ENCODE measurements at regions of chr3 and their contacts with region 1.

Region 1: GRCh38 chr3:15629860-15630597 is 28.5 kb downstream of the BTD start:
- DNase-seq: peak; percentile 70 to 78 (median 75)
- H3K4me3 ChIP-seq: no peak overlapping the region
- H3K4me3 Mint-ChIP-seq: peak overlapping the region; percentile 10 to 83 (median 73)
- H3K27ac ChIP-seq: no peak overlapping the region
- H3K27ac Mint-ChIP-seq: peak overlapping the region in 6 of 7 donors; percentile 14 to 79 (median 67)
- H3K4me1 ChIP-seq: peaks cover 30% of the 10 kb centered on the region
- H3K4me1 Mint-ChIP-seq: peaks cover 15 to 48% (median 31%) of the 10 kb centered on the region in 4 donors
- H3K27me3 ChIP-seq: no peaks in the 10 kb centered on the region
- H3K27me3 Mint-ChIP-seq: no peaks in the 10 kb centered on the region

Region 2: DNA sequence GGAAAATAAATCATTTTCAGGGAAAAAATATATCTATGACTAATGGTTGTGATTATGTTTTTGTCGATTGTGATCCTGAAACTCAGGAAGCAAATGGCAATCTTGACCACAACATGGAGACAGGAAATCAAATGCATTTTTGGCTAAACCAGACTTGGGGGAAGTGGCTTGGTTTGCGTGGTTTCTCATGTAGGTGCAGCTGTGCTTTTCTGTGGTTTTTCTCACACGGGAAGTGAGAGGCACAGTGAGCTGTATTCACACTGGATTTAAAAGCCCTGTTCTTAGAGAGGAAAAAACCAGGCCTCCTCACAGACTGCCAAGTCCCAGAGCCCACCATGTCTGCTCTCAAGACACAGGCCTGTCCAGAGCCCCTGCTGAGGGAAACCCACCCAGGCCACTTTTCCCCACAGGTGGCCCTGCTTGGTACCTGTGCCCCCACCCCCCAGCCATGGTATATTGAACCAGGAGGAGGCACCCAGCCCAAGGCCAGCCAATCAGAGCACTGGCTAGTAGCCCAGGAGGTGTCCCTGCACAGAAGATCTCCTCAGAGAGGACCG is 17.7 kb after region 1 on chr3:
- CTCF ChIA-PET with region 1: interaction called, 14 read pairs
- POLR2A ChIA-PET with region 1: interaction called, 7 read pairs
- intact Hi-C with region 1: loop called (anchors 2 kb)
- DNase-seq: peak; percentile 62 to 74 (median 70)
- H3K4me3 ChIP-seq: no peak overlapping the region
- H3K4me3 Mint-ChIP-seq: peak overlapping the region; percentile 58 to 88 (median 78)
- H3K27ac ChIP-seq: no peak overlapping the region
- H3K27ac Mint-ChIP-seq: peak overlapping the region; percentile 36 to 84 (median 76)
- H3K4me1 ChIP-seq: peaks cover 45% of the 10 kb centered on the region
- H3K4me1 Mint-ChIP-seq: peaks cover 34 to 55% (median 47%) of the 10 kb centered on the region in 4 donors
- H3K27me3 ChIP-seq: no peaks in the 10 kb centered on the region
- H3K27me3 Mint-ChIP-seq: peaks cover 0 to 5% of the 10 kb centered on the region in 2 donors

Region 3: DNA sequence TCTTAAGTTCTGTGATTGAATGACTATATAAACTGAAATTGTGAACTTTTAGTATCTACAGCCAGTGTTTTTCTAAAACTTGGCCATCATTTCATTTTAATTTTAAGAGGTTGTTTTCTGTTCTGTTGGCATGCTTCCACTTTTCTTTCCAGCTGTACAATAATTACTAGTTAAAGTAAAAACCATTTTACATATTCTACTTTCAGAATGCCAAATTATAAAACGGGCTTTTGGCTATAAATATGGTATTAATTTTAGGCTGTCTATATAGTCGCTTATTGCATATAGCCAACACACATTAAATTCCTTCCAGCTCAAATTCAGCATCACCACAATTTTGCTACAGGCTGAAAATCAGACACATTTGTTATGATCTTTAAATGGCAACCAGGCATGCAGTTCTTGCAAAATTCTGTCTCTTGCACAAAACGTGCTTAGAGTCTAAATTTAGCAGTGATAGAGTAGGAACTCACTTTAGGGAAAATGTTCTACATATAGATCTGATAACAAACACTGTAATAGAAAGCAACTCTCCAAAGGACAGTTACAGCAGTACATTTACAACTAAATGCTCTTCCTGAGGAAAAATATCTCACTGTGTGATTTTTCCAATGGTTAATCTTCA is 52.6 kb after region 1 on chr3:
- CTCF ChIA-PET with region 1: interaction called, 4 read pairs
- POLR2A ChIA-PET with region 1: no interaction called
- intact Hi-C with region 1: loop called (anchors 5 kb)
- DNase-seq: no peak
- H3K4me3 ChIP-seq: no peak overlapping the region
- H3K4me3 Mint-ChIP-seq: no peak overlapping the region
- H3K27ac ChIP-seq: no peak overlapping the region
- H3K27ac Mint-ChIP-seq: no peak overlapping the region
- H3K4me1 ChIP-seq: no peaks in the 10 kb centered on the region
- H3K4me1 Mint-ChIP-seq: peaks cover 0 to 7% (median 5%) of the 10 kb centered on the region in 4 donors
- H3K27me3 ChIP-seq: no peaks in the 10 kb centered on the region
- H3K27me3 Mint-ChIP-seq: no peaks in the 10 kb centered on the region

Region 4: DNA sequence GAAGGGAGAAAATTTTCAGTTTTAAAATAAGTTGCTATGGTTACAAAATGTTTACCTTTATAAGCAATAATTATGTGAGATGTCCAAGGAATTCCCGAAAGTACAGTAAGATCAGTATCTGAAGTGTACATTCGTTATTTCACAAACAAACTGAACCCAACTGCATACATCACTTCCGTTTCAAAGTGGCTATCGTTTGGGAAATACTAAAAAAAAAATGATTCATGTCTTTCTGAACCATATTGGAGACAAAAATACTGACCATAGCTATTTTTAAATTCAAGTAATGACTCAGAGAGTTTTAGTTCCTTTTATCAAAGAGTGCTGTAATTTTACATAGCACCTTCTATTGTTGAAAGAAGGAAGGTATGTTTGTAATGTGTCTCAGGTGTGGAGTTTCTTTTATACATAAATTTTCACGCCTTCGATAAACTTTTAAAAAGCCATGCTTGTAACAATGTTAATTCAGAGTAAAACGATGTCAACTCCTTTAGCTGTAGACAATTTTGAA is 175.8 kb after region 1 on chr3:
- CTCF ChIA-PET with region 1: interaction called, 98 read pairs
- POLR2A ChIA-PET with region 1: interaction called, 3 read pairs
- intact Hi-C with region 1: no loop called
- DNase-seq: no peak
- H3K4me3 ChIP-seq: no peak overlapping the region
- H3K4me3 Mint-ChIP-seq: peak overlapping the region in 4 of 8 donors; percentile 14 to 29 (median 20)
- H3K27ac ChIP-seq: no peak overlapping the region
- H3K27ac Mint-ChIP-seq: peak overlapping the region in 6 of 7 donors; percentile 3 to 85 (median 25)
- H3K4me1 ChIP-seq: peaks cover 46% of the 10 kb centered on the region
- H3K4me1 Mint-ChIP-seq: peaks cover 50 to 66% (median 59%) of the 10 kb centered on the region in 4 donors
- H3K27me3 ChIP-seq: no peaks in the 10 kb centered on the region
- H3K27me3 Mint-ChIP-seq: no peaks in the 10 kb centered on the region

Region 5: GRCh38 chr3:15859507-15860013 is 229.5 kb after region 1 on chr3:
- CTCF ChIA-PET with region 1: no interaction called
- POLR2A ChIA-PET with region 1: no interaction called
- intact Hi-C with region 1: loop called (anchors 1 kb)
- DNase-seq: peak; percentile 70 to 80 (median 77)
- H3K4me3 ChIP-seq: peak overlapping the region in 1 of 2 donors; percentile 71
- H3K4me3 Mint-ChIP-seq: peak overlapping the region; percentile 70 to 100 (median 94)
- H3K27ac ChIP-seq: peak overlapping the region; percentile 63
- H3K27ac Mint-ChIP-seq: peak overlapping the region; percentile 88 to 96 (median 94)
- H3K4me1 ChIP-seq: peaks cover 20% of the 10 kb centered on the region
- H3K4me1 Mint-ChIP-seq: peaks cover 16 to 52% (median 29%) of the 10 kb centered on the region in 4 donors
- H3K27me3 ChIP-seq: no peaks in the 10 kb centered on the region
- H3K27me3 Mint-ChIP-seq: no peaks in the 10 kb centered on the region

Region 6: GRCh38 chr3:16177962-16178627 is 548.1 kb after region 1 on chr3:
- CTCF ChIA-PET with region 1: interaction called, 3 read pairs
- POLR2A ChIA-PET with region 1: no interaction called
- intact Hi-C with region 1: loop called (anchors 1 kb)
- DNase-seq: peak in 4 of 5 donors; percentile 35 to 51 (median 40)
- H3K4me3 ChIP-seq: no peak overlapping the region
- H3K4me3 Mint-ChIP-seq: peak overlapping the region in 1 of 8 donors; percentile 10
- H3K27ac ChIP-seq: no peak overlapping the region
- H3K27ac Mint-ChIP-seq: peak overlapping the region in 1 of 7 donors; percentile 38
- H3K4me1 ChIP-seq: no peaks in the 10 kb centered on the region
- H3K4me1 Mint-ChIP-seq: peaks cover 4 to 8% (median 6%) of the 10 kb centered on the region in 4 donors
- H3K27me3 ChIP-seq: no peaks in the 10 kb centered on the region
- H3K27me3 Mint-ChIP-seq: peaks cover 12 to 16% of the 10 kb centered on the region in 2 donors

Measured in CD4-positive, alpha-beta memory T cell (primary cell).